ENCODE measurements at regions of chr4 and their contacts with region 1.

Region 1: DNA sequence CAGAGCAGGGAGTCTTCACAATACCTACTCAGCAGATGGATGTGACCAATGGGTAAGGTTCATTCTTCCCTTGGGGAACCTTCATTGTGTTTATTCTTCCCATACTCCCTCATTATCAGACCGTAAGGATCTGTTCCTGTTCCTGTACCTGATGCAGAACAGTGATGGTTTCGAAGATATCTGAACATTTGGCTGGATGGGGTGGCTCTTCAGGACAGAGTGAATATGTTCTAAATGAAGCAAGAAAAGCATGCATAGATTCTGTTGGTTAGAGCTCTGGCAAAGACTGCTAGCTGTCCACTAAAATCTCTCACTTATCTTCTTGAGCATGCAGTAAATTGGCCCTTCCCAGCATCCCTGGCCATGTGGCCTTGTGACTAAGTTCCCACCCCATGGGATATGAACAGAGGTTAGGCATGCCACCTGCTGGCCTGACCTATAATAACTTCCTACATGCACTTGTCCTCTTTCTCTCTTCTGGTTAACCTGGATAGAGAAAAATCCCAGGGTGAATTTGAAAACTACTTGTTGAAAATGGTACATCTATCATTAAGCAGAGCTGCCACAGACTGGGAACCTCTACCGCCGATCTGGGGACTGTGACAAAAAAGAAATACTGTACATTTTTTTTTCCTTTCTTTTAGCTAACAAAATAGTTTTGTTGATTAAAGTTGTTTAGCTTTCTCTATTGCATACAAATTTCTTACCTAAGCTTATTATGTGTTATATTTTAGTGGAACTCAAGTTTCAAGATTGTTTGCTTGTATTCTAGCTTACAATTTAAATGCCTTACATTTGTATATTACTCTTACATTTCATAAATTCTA is 60.0 kb upstream of the BANK1 start:
- DNase-seq: peak; percentile 70 to 75
- H3K4me3 ChIP-seq: no peak overlapping the region
- H3K27ac ChIP-seq: no peak overlapping the region
- H3K4me1 ChIP-seq: no peaks in the 10 kb centered on the region
- H3K27me3 ChIP-seq: no peaks in the 10 kb centered on the region
- CTCF ChIP-seq: peak; percentile 40 to 72 (median 62)
- POLR2A ChIP-seq: no peak

Region 2: DNA sequence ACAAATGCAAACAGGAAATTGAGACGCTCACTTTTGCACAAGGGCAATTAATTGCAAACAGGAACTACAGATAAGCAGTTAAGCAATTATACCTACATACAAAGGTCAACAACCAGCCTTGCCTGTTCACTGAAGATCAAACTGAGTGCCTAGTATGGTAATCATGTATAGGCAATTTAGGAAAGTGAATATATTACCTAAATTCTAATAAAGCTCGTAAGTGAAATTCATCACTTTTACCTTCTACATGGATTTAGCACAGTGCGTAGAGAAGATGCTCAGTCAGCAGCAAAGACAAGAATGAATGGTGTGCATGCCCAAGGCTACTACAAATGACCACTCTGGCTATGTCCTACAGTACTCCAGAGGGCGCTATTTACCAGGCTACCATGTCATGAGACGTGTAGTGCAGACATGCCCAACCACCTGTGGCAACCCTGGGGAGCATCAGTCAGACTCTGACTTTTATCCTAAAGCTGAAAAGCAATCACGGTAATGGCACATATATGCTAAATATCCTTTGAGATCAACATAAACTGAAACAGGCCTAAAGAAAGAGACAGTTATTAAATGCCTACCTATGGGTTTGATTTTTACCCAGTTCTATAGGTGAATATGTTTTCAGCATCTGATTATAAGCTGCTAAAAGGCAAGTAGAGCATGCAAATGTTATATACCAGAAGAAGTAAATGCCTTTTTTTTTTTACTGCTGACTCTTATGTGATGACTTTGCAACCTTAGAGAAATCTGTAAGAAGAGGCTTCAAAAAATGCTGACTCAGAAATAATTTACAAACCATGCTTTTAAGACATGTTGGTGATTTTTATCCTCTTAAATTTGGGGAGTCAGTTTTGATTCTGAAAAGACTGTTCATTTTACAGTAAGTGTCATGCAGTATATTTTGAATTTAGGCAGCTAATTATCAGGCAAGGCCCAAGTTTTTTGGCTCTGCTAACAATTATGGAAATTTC is 561.2 kb before region 1 on chr4:
- intact Hi-C with region 1: loop called (anchors 5 kb)
- DNase-seq: peak; percentile 70 to 73
- H3K4me3 ChIP-seq: no peak overlapping the region
- H3K27ac ChIP-seq: no peak overlapping the region
- H3K4me1 ChIP-seq: peaks cover 0 to 4% of the 10 kb centered on the region in 2 donors
- H3K27me3 ChIP-seq: no peaks in the 10 kb centered on the region
- CTCF ChIP-seq: peak; percentile 45 to 92 (median 72)
- POLR2A ChIP-seq: no peak

Region 3: DNA sequence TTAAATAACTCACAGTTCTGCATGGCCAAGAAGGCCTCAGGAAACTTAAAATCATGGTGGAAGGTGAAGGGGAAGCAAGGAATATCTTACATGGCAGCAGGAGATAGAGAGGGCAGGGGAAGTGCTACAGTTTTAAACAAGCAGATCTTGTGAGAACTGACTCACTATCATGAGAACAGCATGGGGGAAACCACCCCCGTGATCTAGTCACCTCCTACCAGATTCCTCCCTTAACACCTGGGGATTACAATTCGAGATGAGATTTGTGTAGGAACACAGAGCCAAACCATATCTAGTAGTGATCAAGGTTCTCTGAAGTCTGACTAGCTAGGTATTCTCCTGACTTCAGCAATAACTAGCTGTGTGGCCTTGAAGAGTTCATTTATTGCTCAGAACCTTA is 116.0 kb after region 1 on chr4:
- intact Hi-C with region 1: no loop called
- DNase-seq: no peak
- H3K4me3 ChIP-seq: no peak overlapping the region
- H3K27ac ChIP-seq: no peak overlapping the region
- H3K4me1 ChIP-seq: peaks cover 0 to 7% of the 10 kb centered on the region in 2 donors
- H3K27me3 ChIP-seq: no peaks in the 10 kb centered on the region
- CTCF ChIP-seq: no peak
- POLR2A ChIP-seq: no peak